Dorsolateral prefrontal cortex (tissue), 120 donors: ENCODE measurements at regions of chr11 and their contacts with region 1.

Region 1: GRCh38 chr11:128884703-128885338 is 6.3 kb upstream of the KCNJ5 start:
- DNase-seq: peak in 5 of 10 donors; percentile 44 to 68 (median 63)
- H3K4me3 ChIP-seq: no peak overlapping the region
- H3K27ac ChIP-seq: no peak overlapping the region
- H3K27me3 ChIP-seq: peaks cover 0 to 10% (median 0%) of the 10 kb centered on the region in 45 donors
- CTCF ChIP-seq: peak; percentile 77 to 96 (median 86)

Region 2: GRCh38 chr11:128733440-128734102 is 151.2 kb before region 1 on chr11:
- intact Hi-C with region 1: no loop called
- DNase-seq: no peak
- H3K4me3 ChIP-seq: no peak overlapping the region
- H3K27ac ChIP-seq: peak overlapping the region in 2 of 59 donors; percentile 27 to 46
- H3K27me3 ChIP-seq: peaks cover 0 to 11% (median 0%) of the 10 kb centered on the region in 45 donors
- CTCF ChIP-seq: no peak

Region 3: DNA sequence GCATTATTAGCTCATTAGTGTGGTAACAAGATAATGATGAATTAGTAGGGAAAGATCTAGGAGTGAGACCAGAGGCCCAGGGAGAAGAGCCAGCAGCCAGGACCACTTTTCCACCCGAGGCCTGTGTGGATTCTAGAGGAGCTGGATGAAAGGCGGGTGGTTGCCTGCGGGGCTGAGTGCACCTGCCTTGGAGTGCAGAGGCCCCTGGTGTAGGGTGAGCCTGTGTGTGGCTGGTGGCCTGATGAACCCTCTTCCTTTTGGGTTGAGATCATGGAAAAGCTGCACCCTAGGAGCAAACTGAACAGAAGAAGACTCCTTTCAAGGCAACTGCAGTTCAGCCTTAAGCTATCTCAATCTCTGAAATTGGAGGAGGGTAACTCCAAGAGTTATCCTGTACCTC is 63.8 kb after region 1 on chr11:
- intact Hi-C with region 1: no loop called
- DNase-seq: no peak
- H3K4me3 ChIP-seq: no peak overlapping the region
- H3K27ac ChIP-seq: no peak overlapping the region
- H3K27me3 ChIP-seq: no peaks in the 10 kb centered on the region
- CTCF ChIP-seq: peak in 3 of 56 donors; percentile 12 to 32 (median 15)

Region 4: DNA sequence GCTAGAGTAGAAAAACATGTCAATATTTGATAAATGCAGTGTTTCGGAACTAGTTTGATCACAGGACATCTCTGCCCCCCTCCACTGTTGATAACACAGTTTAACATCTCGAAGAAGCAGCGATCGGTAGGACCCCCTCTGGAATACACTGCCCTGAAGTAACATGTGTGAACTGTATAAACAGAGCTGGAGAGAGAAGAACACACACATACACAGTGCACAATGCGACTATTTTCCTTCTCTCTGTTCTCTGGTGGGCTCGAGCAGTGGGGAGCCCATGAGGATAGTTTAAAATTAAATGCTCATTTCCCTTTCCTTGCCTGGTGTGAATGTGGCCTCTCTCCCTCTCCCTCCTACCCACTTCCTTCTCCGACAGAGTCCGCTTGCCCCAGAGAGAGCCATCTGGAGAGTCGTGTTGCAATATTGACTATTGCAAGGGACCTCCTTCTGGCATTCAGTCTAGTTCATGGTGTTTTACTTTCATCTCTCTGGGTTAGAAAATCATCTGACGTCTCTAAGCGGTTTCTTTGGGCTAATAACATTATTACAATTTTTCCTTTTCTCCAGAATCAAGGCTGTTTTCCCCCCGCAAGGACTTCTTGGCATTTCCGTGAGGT is 439.2 kb after region 1 on chr11:
- intact Hi-C with region 1: loop called in 1 of 2 experiments (anchors 10 kb)
- DNase-seq: no peak
- H3K4me3 ChIP-seq: peak overlapping the region in 7 of 59 donors; percentile 0 to 23 (median 9)
- H3K27ac ChIP-seq: peak overlapping the region in 14 of 59 donors; percentile 12 to 60 (median 36)
- H3K27me3 ChIP-seq: no peaks in the 10 kb centered on the region
- CTCF ChIP-seq: no peak